ENCODE measurements at regions of chr6 and their contacts with region 1.

Region 1: DNA sequence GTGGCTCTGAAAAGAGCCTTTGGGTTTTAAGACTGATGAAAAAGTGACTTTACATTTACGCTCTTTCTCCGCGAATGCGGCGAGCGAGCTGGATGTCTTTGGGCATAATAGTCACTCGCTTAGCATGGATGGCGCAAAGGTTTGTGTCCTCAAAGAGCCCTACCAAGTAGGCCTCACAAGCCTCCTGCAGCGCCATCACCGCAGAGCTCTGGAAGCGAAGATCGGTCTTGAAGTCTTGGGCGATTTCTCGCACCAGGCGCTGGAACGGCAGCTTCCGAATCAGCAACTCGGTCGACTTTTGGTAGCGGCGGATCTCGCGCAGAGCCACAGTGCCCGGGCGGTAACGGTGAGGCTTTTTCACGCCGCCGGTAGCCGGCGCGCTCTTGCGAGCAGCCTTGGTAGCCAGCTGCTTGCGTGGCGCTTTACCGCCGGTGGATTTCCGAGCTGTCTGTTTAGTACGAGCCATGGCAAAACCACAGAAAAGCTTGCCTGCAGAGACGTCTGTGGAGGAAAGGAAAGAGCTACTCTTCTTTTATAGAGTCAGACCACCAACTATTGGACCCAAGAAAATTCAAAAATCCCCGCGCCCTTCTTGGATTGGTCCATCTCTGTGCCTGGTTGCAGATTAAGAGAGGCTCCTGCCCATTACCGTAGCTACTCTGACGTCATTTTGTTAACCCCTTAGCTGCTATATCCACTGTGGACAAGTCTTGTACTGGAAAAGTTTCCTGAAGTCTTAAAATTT is 55.5 kb upstream of the HFE start:
- DNase-seq: peak; percentile 99
- H3K4me3 ChIP-seq: peak overlapping the region; percentile 67
- H3K27ac ChIP-seq: peak overlapping the region; percentile 91
- H3K4me1 ChIP-seq: peaks cover 21% of the 10 kb centered on the region
- H3K27me3 ChIP-seq: no peaks in the 10 kb centered on the region
- CTCF ChIP-seq: peak; percentile 33; the same call in 1 of the 2 replicates

Region 2: GRCh38 chr6:26045065-26045927 is 13.5 kb after region 1 on chr6:
- CTCF ChIA-PET with region 1: interaction called, 4 read pairs
- POLR2A ChIA-PET with region 1: interaction called, 19 read pairs
- intact Hi-C with region 1: no loop called
- DNase-seq: peak; percentile 93
- H3K4me3 ChIP-seq: peak overlapping the region; percentile 42
- H3K27ac ChIP-seq: peak overlapping the region; percentile 80
- H3K4me1 ChIP-seq: peaks cover 7% of the 10 kb centered on the region
- H3K27me3 ChIP-seq: no peaks in the 10 kb centered on the region
- CTCF ChIP-seq: 0 out of 2 replicates have a peak, but pooled peaks have one; percentile 19

Region 3: DNA sequence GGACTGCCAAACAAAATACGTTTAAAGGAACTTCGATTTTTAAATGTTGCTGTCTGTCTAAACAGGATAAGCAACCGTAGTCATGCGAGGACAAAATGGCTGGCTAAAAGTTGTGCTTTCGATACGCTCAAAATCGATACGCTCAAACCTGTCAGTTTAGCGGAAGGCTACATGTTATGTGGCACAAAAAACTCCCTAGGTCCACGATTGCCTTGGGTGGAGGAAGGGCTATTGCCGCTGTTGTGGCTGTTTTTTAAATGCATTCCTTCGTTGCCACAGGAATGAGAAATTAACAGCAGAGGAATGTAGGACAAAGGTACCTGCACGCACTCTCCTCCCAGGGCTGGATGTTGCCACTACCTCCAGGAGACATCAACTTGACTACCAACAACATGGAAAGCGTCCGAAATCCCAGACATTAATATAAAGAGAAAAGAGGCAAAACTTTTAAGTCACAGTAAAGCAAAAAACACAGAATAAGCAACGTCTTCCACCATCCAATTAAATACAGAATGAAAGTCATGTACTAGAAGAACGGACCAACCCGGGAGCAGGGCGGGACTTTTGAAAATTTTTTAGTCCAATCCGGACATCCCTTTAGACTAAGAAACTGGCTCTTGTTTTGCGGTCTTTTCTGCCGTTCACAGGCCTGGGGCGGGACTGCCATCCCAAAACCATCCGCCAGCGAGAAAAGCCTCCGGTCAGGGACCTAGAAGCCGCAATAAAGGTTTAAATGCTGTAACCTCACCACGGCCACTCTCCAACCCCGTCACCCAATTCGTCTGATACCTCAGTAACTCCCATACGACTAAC is 23.3 kb after region 1 on chr6:
- CTCF ChIA-PET with region 1: no interaction called
- POLR2A ChIA-PET with region 1: interaction called, 7 read pairs
- intact Hi-C with region 1: loop called (anchors 2 kb)
- DNase-seq: peak; percentile 96
- H3K4me3 ChIP-seq: peak overlapping the region; percentile 78
- H3K27ac ChIP-seq: peak overlapping the region; percentile 96
- H3K4me1 ChIP-seq: peaks cover 20% of the 10 kb centered on the region
- H3K27me3 ChIP-seq: no peaks in the 10 kb centered on the region
- CTCF ChIP-seq: no peak

Region 4: GRCh38 chr6:26401987-26402658 is 370.4 kb after region 1 on chr6 and contains the start of gene BTN3A1:
- CTCF ChIA-PET with region 1: no interaction called
- POLR2A ChIA-PET with region 1: no interaction called
- intact Hi-C with region 1: no loop called
- DNase-seq: peak; percentile 85
- H3K4me3 ChIP-seq: peak within 1 kb of the TSS; percentile 63
- H3K27ac ChIP-seq: peak within 1 kb of the TSS; percentile 79
- H3K4me1 ChIP-seq: no peaks in the 10 kb centered on the region
- H3K27me3 ChIP-seq: no peaks in the 10 kb centered on the region
- CTCF ChIP-seq: no peak
- total RNA-seq, gene BTN3A1: 14.2 and 14.8 TPM in 2 replicates

Measured in A673 (cell line).